RWPE1 (cell line): ENCODE measurements at regions of chr5 and their contacts with region 1.

Region 1: DNA sequence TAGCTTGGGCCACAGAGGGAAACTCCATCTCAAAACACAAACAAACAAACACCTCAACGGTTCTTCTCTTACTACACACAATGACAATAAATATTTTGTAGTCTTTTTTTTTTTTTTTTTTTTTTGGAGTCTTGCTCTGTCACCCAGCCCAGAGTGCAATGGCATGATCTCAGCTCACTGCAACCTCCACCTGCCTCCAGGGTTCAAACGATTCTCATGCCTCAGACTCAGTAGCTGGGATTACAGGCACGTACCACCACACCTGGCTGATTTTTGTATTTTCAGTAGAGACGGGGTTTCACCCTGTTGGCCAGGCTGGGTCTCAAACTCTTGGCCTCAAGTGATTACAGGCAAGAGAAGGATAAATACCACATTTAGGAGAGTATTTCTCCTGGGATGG is 30.1 kb downstream of the ERGIC1 start:
- DNase-seq: no peak
- H3K27ac ChIP-seq: peak overlapping the region; percentile 61
- CTCF ChIP-seq: no peak

Region 2: DNA sequence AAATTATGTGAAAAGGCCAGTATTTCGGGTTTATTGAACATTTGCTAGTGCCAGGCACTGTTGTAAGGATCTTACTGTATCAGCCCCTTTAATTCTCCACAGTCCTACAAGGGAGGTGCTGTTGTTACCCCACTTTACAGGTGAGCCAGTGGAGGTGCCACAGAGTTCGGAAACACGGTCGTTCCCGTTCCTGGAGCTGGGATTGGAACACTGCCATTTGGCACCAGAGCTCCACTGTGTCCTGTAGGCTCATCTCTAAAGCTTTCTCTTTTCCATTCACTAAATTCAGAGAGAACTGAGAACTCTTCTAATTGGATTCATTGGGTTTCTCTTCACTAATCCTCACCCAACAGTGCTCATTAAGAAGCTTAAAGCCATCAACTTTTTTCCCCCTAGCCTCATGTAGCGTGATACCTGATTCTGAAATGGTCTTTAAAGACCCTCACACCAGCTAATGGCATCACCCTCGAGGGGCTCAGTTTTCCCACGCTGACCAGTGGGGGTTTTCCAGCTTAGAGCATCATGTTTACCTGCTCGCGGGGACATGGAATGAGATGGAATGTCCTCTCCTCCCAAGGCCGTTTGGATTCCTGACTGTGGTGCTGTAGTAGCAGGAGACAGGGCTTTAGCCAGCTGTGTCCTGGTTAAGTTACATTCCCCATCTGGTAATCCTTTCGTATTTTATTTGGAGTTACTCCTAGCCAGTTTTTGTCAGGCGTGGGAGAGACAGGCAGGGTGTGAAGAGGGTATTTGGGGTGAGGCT is 24.3 kb before region 1 on chr5:
- CTCF ChIA-PET with region 1: no interaction called
- POLR2A ChIA-PET with region 1: interaction called, 10 read pairs
- DNase-seq: no peak
- H3K27ac ChIP-seq: peak overlapping the region; percentile 53
- CTCF ChIP-seq: no peak